Naive thymus-derived CD4-positive, alpha-beta T cell (primary cell): ENCODE measurements at regions of chr11 and their contacts with region 1.

Region 1: GRCh38 chr11:78564490-78565467 is 9.9 kb downstream of the NARS2 start:
- DNase-seq: peak in 7 of 9 donors; percentile 37 to 66 (median 60)
- ATAC-seq: peak; percentile 83
- H3K4me3 ChIP-seq: no peak overlapping the region
- H3K4me3 Mint-ChIP-seq: peak overlapping the region in 2 of 10 donors; percentile 23 to 31
- H3K27ac ChIP-seq: no peak overlapping the region
- H3K27ac Mint-ChIP-seq: peak overlapping the region in 5 of 9 donors; percentile 30 to 84 (median 58)
- H3K4me1 ChIP-seq: peaks cover 0 to 13% of the 10 kb centered on the region in 2 donors
- H3K4me1 Mint-ChIP-seq: peaks cover 22 to 50% (median 36%) of the 10 kb centered on the region in 7 donors
- H3K27me3 ChIP-seq: no peaks in the 10 kb centered on the region
- H3K27me3 Mint-ChIP-seq: no peaks in the 10 kb centered on the region

Region 2: DNA sequence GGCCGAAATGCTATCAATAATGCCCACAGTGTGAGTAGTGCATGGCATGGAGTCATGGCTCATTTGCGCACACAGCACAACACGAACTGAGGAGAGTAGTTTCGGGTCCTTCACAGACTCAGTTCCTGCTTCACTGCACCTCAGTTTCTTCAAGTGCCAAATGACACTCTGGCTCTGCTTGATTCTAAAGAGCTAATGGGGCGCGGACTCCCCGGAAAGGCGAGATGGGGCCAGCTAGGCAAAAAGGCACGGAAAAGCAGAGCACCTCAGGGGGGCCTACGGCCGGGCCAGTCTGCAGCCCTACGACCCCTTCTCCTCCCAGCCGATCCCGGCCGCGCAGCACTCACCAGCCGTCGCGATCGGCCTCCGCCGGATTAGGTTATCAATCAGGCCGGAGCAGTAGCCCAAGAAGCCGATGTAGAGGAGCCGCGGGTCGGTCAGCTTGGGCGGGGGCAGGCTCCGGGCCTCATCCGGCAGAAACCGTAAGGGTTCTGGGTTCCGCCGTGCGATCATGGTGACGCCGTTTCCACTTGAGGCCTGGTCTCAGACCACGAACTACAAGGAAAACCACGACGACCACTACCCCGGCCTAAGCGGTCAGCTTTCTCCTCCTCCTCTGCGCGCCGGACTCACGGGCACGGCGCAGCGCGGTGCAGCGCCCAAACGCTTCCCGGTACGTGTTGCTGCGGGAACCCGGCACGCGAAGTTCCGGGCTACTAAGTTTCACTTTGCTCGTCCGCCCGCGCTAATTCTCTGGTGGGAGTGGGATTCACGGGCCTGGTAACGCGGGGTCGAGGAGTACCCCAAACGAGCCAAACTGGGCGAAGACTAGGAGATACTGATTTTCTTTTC is 485.3 kb before region 1 on chr11 and contains the start of gene NDUFC2:
- CTCF ChIA-PET with region 1: no interaction called
- POLR2A ChIA-PET with region 1: no interaction called
- intact Hi-C with region 1: loop called (anchors 2 to 5 kb)
- DNase-seq: peak; percentile 37 to 73 (median 61)
- ATAC-seq: peak; percentile 90
- H3K4me3 ChIP-seq: peak within 1 kb of the TSS; percentile 99
- H3K4me3 Mint-ChIP-seq: peak within 1 kb of the TSS; percentile 92 to 98 (median 95)
- H3K27ac ChIP-seq: peak within 1 kb of the TSS; percentile 83
- H3K27ac Mint-ChIP-seq: peak within 1 kb of the TSS; percentile 90 to 97 (median 95)
- H3K4me1 ChIP-seq: peaks cover 38 to 43% of the 10 kb centered on the region in 2 donors
- H3K4me1 Mint-ChIP-seq: peaks cover 41 to 68% (median 53%) of the 10 kb centered on the region in 7 donors
- H3K27me3 ChIP-seq: no peaks in the 10 kb centered on the region
- H3K27me3 Mint-ChIP-seq: no peaks in the 10 kb centered on the region
- total RNA-seq, gene NDUFC2: 43.4 to 189 (median 64.7) TPM

Region 3: DNA sequence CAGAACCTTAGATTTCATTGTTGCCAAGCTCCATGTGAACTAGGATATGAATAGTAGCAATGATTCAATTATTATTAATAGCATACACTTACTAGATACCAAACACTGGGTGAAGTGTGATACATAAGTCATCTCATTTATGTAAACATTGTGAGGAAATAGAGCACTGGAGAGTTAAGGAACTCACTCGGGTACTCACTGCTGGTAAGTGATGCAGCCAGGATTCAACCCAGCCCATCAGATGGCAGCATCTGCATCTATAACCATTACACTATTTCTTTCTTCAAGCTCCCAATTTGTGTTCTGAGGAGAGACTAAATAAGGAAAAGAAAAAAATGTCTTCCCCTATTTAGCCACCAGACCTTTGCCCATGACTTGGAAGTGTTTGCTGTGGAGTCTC is 415.1 kb before region 1 on chr11:
- CTCF ChIA-PET with region 1: interaction called, 9 read pairs
- POLR2A ChIA-PET with region 1: no interaction called
- intact Hi-C with region 1: loop called in 1 of 2 experiments (anchors 1 kb)
- DNase-seq: peak in 5 of 9 donors; percentile 15 to 42 (median 21)
- ATAC-seq: peak; percentile 48
- H3K4me3 ChIP-seq: no peak overlapping the region
- H3K4me3 Mint-ChIP-seq: no peak overlapping the region
- H3K27ac ChIP-seq: no peak overlapping the region
- H3K27ac Mint-ChIP-seq: no peak overlapping the region
- H3K4me1 ChIP-seq: no peaks in the 10 kb centered on the region
- H3K4me1 Mint-ChIP-seq: peaks cover 0 to 6% (median 0%) of the 10 kb centered on the region in 7 donors
- H3K27me3 ChIP-seq: no peaks in the 10 kb centered on the region
- H3K27me3 Mint-ChIP-seq: no peaks in the 10 kb centered on the region

Region 4: GRCh38 chr11:78290293-78291176 is 274.2 kb before region 1 on chr11:
- CTCF ChIA-PET with region 1: no interaction called
- POLR2A ChIA-PET with region 1: no interaction called
- intact Hi-C with region 1: loop called in 1 of 2 experiments (anchors 5 kb)
- DNase-seq: peak in 2 of 9 donors; percentile 28 to 30
- ATAC-seq: peak; percentile 80
- H3K4me3 ChIP-seq: no peak overlapping the region
- H3K4me3 Mint-ChIP-seq: peak overlapping the region in 4 of 10 donors; percentile 2 to 68 (median 35)
- H3K27ac ChIP-seq: no peak overlapping the region
- H3K27ac Mint-ChIP-seq: peak overlapping the region in 4 of 9 donors; percentile 15 to 95 (median 32)
- H3K4me1 ChIP-seq: peaks cover 0 to 5% of the 10 kb centered on the region in 2 donors
- H3K4me1 Mint-ChIP-seq: peaks cover 18 to 58% (median 32%) of the 10 kb centered on the region in 7 donors
- H3K27me3 ChIP-seq: no peaks in the 10 kb centered on the region
- H3K27me3 Mint-ChIP-seq: no peaks in the 10 kb centered on the region

Region 5: GRCh38 chr11:78465169-78465942 is 99.4 kb before region 1 on chr11:
- CTCF ChIA-PET with region 1: interaction called, 3 read pairs
- POLR2A ChIA-PET with region 1: no interaction called
- intact Hi-C with region 1: loop called in 1 of 2 experiments (anchors 1 kb)
- DNase-seq: peak in 6 of 9 donors; percentile 16 to 55 (median 26)
- ATAC-seq: peak; percentile 93
- H3K4me3 ChIP-seq: no peak overlapping the region
- H3K4me3 Mint-ChIP-seq: peak overlapping the region; percentile 37 to 81 (median 64)
- H3K27ac ChIP-seq: peak overlapping the region; percentile 3
- H3K27ac Mint-ChIP-seq: peak overlapping the region; percentile 54 to 95 (median 79)
- H3K4me1 ChIP-seq: peaks cover 4 to 5% of the 10 kb centered on the region in 2 donors
- H3K4me1 Mint-ChIP-seq: peaks cover 12 to 44% (median 17%) of the 10 kb centered on the region in 7 donors
- H3K27me3 ChIP-seq: no peaks in the 10 kb centered on the region
- H3K27me3 Mint-ChIP-seq: no peaks in the 10 kb centered on the region

Region 6: DNA sequence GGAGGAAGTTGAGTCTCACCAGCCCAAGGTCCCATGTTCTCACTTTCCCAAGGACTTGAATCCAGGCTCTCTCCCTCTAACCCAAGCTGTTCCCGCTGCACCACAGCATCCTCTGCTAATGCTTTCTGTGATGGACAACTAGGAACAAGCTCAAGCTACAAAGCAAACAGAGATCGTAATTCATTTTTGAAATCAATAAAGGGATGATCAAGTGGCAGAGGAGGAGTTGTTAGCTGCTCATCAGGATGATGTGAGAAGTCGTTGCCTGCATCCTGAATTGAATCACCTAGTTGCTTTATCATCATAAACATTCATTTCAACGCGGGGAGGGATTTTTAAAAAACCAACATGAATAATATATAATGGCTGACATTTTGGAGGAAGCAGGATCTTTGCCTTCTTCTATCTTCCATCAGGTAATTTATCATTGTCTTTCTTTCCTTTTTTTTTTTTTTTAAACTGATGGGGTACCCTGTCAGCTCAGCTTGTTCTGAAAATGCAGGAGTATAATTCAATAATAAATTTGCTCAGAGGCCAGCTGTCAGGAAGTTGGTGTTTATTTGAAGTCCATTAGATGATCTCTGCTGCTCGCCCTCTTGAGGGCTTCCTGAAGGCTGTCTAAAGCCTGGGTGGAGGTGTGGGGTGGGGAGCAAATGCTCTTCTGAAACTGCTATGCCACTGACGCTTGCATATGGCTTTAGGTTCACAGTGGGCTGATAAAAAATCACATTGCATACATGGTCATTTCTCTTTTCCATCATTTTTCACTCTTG is 184.3 kb after region 1 on chr11:
- CTCF ChIA-PET with region 1: no interaction called
- POLR2A ChIA-PET with region 1: no interaction called
- intact Hi-C with region 1: no loop called
- DNase-seq: no peak
- ATAC-seq: no peak
- H3K4me3 ChIP-seq: no peak overlapping the region
- H3K4me3 Mint-ChIP-seq: no peak overlapping the region
- H3K27ac ChIP-seq: no peak overlapping the region
- H3K27ac Mint-ChIP-seq: no peak overlapping the region
- H3K4me1 ChIP-seq: no peaks in the 10 kb centered on the region
- H3K4me1 Mint-ChIP-seq: no peaks in the 10 kb centered on the region
- H3K27me3 ChIP-seq: no peaks in the 10 kb centered on the region
- H3K27me3 Mint-ChIP-seq: peaks cover 6 to 28% (median 15%) of the 10 kb centered on the region in 5 donors

Region 7: GRCh38 chr11:79173615-79174014 is 608.8 kb after region 1 on chr11:
- CTCF ChIA-PET with region 1: no interaction called
- POLR2A ChIA-PET with region 1: no interaction called
- intact Hi-C with region 1: no loop called
- DNase-seq: no peak
- ATAC-seq: no peak
- H3K4me3 ChIP-seq: no peak overlapping the region
- H3K4me3 Mint-ChIP-seq: no peak overlapping the region
- H3K27ac ChIP-seq: no peak overlapping the region
- H3K27ac Mint-ChIP-seq: no peak overlapping the region
- H3K4me1 ChIP-seq: no peaks in the 10 kb centered on the region
- H3K4me1 Mint-ChIP-seq: no peaks in the 10 kb centered on the region
- H3K27me3 ChIP-seq: no peaks in the 10 kb centered on the region
- H3K27me3 Mint-ChIP-seq: peaks cover 0 to 37% (median 19%) of the 10 kb centered on the region in 5 donors